Naive thymus-derived CD4-positive, alpha-beta T cell (primary cell): ENCODE measurements at regions of chr11 and their contacts with region 1.

Region 1: DNA sequence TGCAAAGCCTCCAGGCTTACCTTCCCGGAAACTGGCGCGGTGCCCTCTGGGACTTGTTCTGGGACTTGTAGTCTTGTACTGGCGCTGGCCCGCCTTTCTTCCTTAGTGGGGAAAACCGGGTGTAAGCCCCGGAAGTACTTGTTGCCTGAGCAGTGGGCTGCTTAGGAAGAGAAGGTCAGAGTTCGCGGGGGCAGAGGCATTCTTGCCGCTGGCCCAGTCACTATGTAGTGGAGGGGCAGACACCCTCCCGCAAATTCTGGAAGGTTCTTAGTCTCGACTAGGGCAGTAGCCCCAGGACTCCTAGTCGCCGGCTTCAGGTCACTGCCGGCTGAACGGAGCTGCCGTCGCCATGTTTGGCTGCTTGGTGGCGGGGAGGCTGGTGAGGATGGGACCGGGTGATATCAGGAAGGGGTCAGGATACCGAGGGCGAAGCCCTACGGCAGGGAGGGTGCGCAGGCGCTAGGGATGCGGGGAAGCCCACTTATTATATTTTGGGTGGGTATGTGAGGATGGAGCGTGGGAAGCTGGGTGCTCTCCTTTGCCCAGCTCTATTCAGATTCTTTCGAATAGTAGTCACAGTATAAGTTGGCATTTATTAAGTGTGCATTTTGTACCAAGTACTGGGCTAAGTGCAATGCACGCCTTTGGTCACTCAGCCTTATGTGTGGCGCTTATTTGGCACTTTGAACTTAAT is at the start of gene HIKESHI:
- DNase-seq: peak; percentile 70 to 92 (median 81)
- ATAC-seq: peak; percentile 100
- H3K4me3 ChIP-seq: peak within 1 kb of the TSS; percentile 96
- H3K4me3 Mint-ChIP-seq: peak within 1 kb of the TSS; percentile 95 to 100 (median 100)
- H3K27ac ChIP-seq: peak within 1 kb of the TSS; percentile 86
- H3K27ac Mint-ChIP-seq: peak within 1 kb of the TSS; percentile 92 to 100 (median 97)
- H3K4me1 ChIP-seq: peaks cover 10 to 13% of the 10 kb centered on the region in 2 donors
- H3K4me1 Mint-ChIP-seq: peaks cover 4 to 37% (median 32%) of the 10 kb centered on the region in 7 donors
- H3K27me3 ChIP-seq: no peaks in the 10 kb centered on the region
- H3K27me3 Mint-ChIP-seq: peaks cover 0 to 8% (median 0%) of the 10 kb centered on the region in 5 donors
- total RNA-seq, gene HIKESHI: 16.7 to 38.4 (median 29.5) TPM

Region 2: GRCh38 chr11:85627998-85628770 is 674.1 kb before region 1 on chr11 and contains the start of gene TMEM126B:
- CTCF ChIA-PET with region 1: no interaction called
- POLR2A ChIA-PET with region 1: interaction called, 3 read pairs
- intact Hi-C with region 1: loop called (anchors 1 kb)
- DNase-seq: peak; percentile 85 to 95 (median 94)
- ATAC-seq: peak; percentile 99
- H3K4me3 ChIP-seq: peak within 1 kb of the TSS; percentile 98
- H3K4me3 Mint-ChIP-seq: peak within 1 kb of the TSS; percentile 84 to 98 (median 94)
- H3K27ac ChIP-seq: peak within 1 kb of the TSS; percentile 85
- H3K27ac Mint-ChIP-seq: peak within 1 kb of the TSS; percentile 89 to 97 (median 94)
- H3K4me1 ChIP-seq: peaks cover 13 to 22% of the 10 kb centered on the region in 2 donors
- H3K4me1 Mint-ChIP-seq: peaks cover 17 to 67% (median 48%) of the 10 kb centered on the region in 7 donors
- H3K27me3 ChIP-seq: no peaks in the 10 kb centered on the region
- H3K27me3 Mint-ChIP-seq: peaks cover 0 to 9% (median 0%) of the 10 kb centered on the region in 5 donors
- total RNA-seq, gene TMEM126B: 22.1 to 50.4 (median 36.4) TPM

Region 3: GRCh38 chr11:85647604-85648299 is 654.5 kb before region 1 on chr11 and contains the start of gene TMEM126A:
- CTCF ChIA-PET with region 1: no interaction called
- POLR2A ChIA-PET with region 1: interaction called, 4 read pairs
- intact Hi-C with region 1: loop called (anchors 5 kb)
- DNase-seq: peak; percentile 85 to 92 (median 90)
- ATAC-seq: peak; percentile 99
- H3K4me3 ChIP-seq: peak within 1 kb of the TSS; percentile 83
- H3K4me3 Mint-ChIP-seq: peak within 1 kb of the TSS; percentile 92 to 100 (median 98)
- H3K27ac ChIP-seq: peak within 1 kb of the TSS; percentile 87
- H3K27ac Mint-ChIP-seq: peak within 1 kb of the TSS; percentile 86 to 99 (median 98)
- H3K4me1 ChIP-seq: peaks cover 11 to 14% of the 10 kb centered on the region in 2 donors
- H3K4me1 Mint-ChIP-seq: peaks cover 9 to 48% (median 38%) of the 10 kb centered on the region in 7 donors
- H3K27me3 ChIP-seq: no peaks in the 10 kb centered on the region
- H3K27me3 Mint-ChIP-seq: peaks cover 12 to 29% (median 22%) of the 10 kb centered on the region in 5 donors
- total RNA-seq, gene TMEM126A: 17.8 to 40.8 (median 18.9) TPM

Region 4: DNA sequence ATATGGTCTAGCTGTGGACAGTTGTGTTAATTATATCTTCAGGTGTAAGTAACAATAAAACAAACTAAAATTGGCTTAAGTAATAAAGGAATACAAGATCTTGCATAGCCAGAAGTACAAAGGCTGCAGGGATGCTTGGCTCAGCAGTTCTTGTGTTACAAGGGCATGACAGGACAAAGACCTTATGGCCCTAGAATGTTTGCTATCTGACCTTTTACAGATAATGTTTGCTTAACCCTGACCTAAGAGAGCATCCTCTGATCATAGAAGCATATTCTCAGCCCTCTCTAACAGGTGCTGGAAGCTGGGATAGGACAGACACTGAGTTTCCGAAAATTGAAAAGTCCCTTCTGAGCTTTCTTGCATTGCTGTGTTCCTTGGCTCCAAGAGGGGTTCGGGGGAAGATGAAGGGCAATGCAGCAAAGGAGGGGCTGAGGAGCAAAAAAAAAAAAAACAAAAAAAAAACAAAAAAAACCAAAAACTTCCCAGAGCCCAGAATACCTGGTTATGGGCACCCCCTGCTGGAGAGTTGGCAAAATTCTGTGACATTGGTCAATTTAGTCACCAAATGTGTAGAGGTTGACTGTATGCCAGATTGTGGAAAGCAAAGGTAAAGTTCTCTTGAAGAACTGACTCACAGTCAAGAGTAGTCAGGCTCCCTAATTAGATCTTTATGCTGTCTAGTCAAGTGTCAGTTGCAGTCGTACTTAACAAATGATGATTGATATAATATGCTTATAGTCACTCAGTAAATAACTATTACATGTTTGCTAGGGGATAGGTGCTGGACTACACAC is 10.6 kb before region 1 on chr11:
- CTCF ChIA-PET with region 1: interaction called, 3 read pairs
- POLR2A ChIA-PET with region 1: no interaction called
- intact Hi-C with region 1: loop called in 1 of 2 experiments (anchors 1 kb)
- DNase-seq: peak; percentile 11 to 63 (median 49)
- ATAC-seq: peak; percentile 76
- H3K4me3 ChIP-seq: no peak overlapping the region
- H3K4me3 Mint-ChIP-seq: peak overlapping the region in 1 of 10 donors; percentile 23
- H3K27ac ChIP-seq: no peak overlapping the region
- H3K27ac Mint-ChIP-seq: peak overlapping the region in 1 of 9 donors; percentile 35
- H3K4me1 ChIP-seq: peaks cover 0 to 27% of the 10 kb centered on the region in 2 donors
- H3K4me1 Mint-ChIP-seq: peaks cover 5 to 47% (median 9%) of the 10 kb centered on the region in 7 donors
- H3K27me3 ChIP-seq: no peaks in the 10 kb centered on the region
- H3K27me3 Mint-ChIP-seq: no peaks in the 10 kb centered on the region

Region 5: GRCh38 chr11:86314646-86315045 is 12.4 kb after region 1 on chr11:
- CTCF ChIA-PET with region 1: no interaction called
- POLR2A ChIA-PET with region 1: no interaction called
- intact Hi-C with region 1: no loop called
- DNase-seq: no peak
- ATAC-seq: no peak
- H3K4me3 ChIP-seq: no peak overlapping the region
- H3K4me3 Mint-ChIP-seq: no peak overlapping the region
- H3K27ac ChIP-seq: no peak overlapping the region
- H3K27ac Mint-ChIP-seq: no peak overlapping the region
- H3K4me1 ChIP-seq: no peaks in the 10 kb centered on the region
- H3K4me1 Mint-ChIP-seq: peaks cover 20 to 42% (median 33%) of the 10 kb centered on the region in 7 donors
- H3K27me3 ChIP-seq: no peaks in the 10 kb centered on the region
- H3K27me3 Mint-ChIP-seq: no peaks in the 10 kb centered on the region

Region 6: GRCh38 chr11:86592659-86593451 is 290.6 kb after region 1 on chr11:
- CTCF ChIA-PET with region 1: no interaction called
- POLR2A ChIA-PET with region 1: no interaction called
- intact Hi-C with region 1: loop called in 1 of 2 experiments (anchors 1 kb)
- DNase-seq: peak in 7 of 9 donors; percentile 25 to 77 (median 37)
- ATAC-seq: peak; percentile 78
- H3K4me3 ChIP-seq: no peak overlapping the region
- H3K4me3 Mint-ChIP-seq: peak overlapping the region in 3 of 10 donors; percentile 10 to 35 (median 23)
- H3K27ac ChIP-seq: no peak overlapping the region
- H3K27ac Mint-ChIP-seq: peak overlapping the region in 2 of 9 donors; percentile 32 to 58
- H3K4me1 ChIP-seq: peaks cover 0 to 7% of the 10 kb centered on the region in 2 donors
- H3K4me1 Mint-ChIP-seq: peaks cover 7 to 21% (median 14%) of the 10 kb centered on the region in 7 donors
- H3K27me3 ChIP-seq: no peaks in the 10 kb centered on the region
- H3K27me3 Mint-ChIP-seq: no peaks in the 10 kb centered on the region

Region 7: GRCh38 chr11:86802601-86803051 is 500.4 kb after region 1 on chr11:
- CTCF ChIA-PET with region 1: no interaction called
- POLR2A ChIA-PET with region 1: no interaction called
- intact Hi-C with region 1: loop called in 1 of 2 experiments (anchors 10 kb)
- DNase-seq: no peak
- ATAC-seq: peak; percentile 41
- H3K4me3 ChIP-seq: no peak overlapping the region
- H3K4me3 Mint-ChIP-seq: peak overlapping the region in 1 of 10 donors; percentile 40
- H3K27ac ChIP-seq: no peak overlapping the region
- H3K27ac Mint-ChIP-seq: no peak overlapping the region
- H3K4me1 ChIP-seq: peaks cover 0 to 25% of the 10 kb centered on the region in 2 donors
- H3K4me1 Mint-ChIP-seq: peaks cover 0 to 59% (median 9%) of the 10 kb centered on the region in 7 donors
- H3K27me3 ChIP-seq: peaks cover 0 to 4% of the 10 kb centered on the region in 2 donors
- H3K27me3 Mint-ChIP-seq: peaks cover 28 to 56% (median 53%) of the 10 kb centered on the region in 5 donors

Region 8: DNA sequence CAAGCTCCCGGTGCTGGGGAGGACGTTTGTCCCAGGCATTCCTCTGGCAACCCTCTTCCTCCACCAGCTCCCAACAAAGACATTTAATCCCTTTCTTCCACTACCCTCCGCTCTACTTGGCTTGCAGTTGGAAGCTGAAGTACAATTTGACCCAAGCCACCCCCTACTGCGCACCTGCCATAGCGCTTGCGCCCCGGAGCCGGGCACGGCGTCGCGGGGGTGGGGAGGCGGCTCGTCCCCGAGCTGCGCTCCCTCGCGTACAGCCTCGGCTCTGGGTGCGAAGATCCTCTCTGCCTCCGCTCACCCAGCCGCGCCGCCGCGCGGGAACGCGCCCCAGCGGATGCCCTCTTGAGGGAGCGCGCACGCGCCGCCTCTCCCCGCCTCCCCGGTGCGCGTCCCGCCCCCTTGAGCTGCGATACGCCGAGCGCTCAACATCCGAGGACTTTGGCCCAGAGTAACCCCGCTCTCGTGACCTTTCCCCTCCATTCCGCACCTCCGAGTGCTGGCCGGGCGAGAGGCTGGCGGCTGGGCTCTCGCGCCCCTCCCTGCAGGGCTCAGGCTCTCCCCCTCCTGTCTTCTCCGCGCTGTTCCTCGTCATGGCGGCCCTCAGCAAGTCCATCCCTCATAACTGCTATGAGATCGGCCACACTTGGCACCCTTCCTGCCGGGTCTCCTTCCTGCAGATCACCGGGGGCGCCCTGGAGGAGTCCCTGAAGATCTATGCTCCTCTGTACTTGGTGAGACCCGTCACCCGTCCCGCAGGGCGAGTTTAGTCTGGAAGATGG is 735.4 kb after region 1 on chr11 and contains the start of gene TMEM135:
- CTCF ChIA-PET with region 1: no interaction called
- POLR2A ChIA-PET with region 1: no interaction called
- intact Hi-C with region 1: loop called in 1 of 2 experiments (anchors 10 kb)
- DNase-seq: peak; percentile 82 to 96 (median 90)
- ATAC-seq: peak; percentile 99
- H3K4me3 ChIP-seq: peak within 1 kb of the TSS; percentile 97
- H3K4me3 Mint-ChIP-seq: peak within 1 kb of the TSS; percentile 92 to 99 (median 97)
- H3K27ac ChIP-seq: peak within 1 kb of the TSS; percentile 69
- H3K27ac Mint-ChIP-seq: peak within 1 kb of the TSS; percentile 77 to 96 (median 93)
- H3K4me1 ChIP-seq: peaks cover 11 to 15% of the 10 kb centered on the region in 2 donors
- H3K4me1 Mint-ChIP-seq: peaks cover 37 to 68% (median 58%) of the 10 kb centered on the region in 7 donors
- H3K27me3 ChIP-seq: no peaks in the 10 kb centered on the region
- H3K27me3 Mint-ChIP-seq: peaks cover 0 to 19% (median 0%) of the 10 kb centered on the region in 5 donors
- total RNA-seq, gene TMEM135: 8.3 to 26.8 (median 12.8) TPM